IMR-90 (cell line): ENCODE measurements at regions of chr2 and their contacts with region 1.

Region 1: DNA sequence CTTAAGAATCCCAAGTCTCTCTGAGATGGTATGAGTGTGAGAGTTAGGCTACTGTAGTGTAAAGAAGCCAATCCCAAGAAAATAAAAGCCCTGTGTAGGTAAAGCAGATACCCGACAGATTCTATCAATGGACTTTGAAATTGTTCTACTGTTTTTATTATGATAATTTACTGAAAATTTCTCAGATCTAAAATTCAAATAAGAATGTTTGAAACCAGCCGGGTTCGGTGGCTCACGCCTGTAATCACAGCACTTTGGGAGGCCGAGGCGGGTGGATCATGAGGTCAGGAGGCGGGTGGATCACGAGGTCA is 208.3 kb upstream of the SPRED2 start:
- DNase-seq: no peak
- ATAC-seq: no peak
- H3K4me3 ChIP-seq: no peak overlapping the region
- H3K27ac ChIP-seq: no peak overlapping the region
- H3K4me1 ChIP-seq: peaks cover 2% of the 10 kb centered on the region
- H3K27me3 ChIP-seq: peaks cover 28% of the 10 kb centered on the region
- CTCF ChIP-seq: no peak
- POLR2A ChIP-seq: no peak
- RAD21 ChIP-seq: no peak

Region 2: DNA sequence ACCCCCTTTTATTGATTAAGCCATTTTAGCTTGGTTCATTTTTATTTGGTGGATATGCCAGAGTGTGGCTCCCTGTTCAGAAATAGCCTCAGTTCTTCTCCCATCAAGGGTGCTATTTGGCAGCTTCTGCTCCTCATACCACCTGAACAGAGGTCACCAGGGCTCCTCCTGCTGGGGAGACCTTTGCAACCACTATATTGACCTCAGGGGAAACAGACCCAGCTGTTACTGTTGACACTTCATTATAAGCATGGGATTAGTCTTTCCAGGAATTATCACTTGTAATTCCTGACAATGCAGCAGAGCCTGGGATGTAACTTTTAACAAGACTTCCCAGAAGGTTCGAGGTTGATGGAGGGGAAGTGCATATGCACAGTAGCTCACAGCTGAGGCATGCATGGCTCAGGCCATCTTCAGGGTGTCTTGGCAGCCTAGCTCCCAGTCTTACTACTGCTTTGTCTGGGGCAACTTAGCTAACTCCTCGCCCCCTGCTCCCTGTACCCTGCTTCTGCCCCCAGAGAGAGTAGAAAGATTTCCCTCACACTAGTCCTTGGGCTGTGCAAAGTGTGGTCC is 31.0 kb after region 1 on chr2:
- CTCF ChIA-PET with region 1: no interaction called
- POLR2A ChIA-PET with region 1: no interaction called
- dilution Hi-C with region 1: no loop called
- in situ Hi-C with region 1: no loop called
- intact Hi-C with region 1: no loop called
- DNase-seq: no peak
- ATAC-seq: no peak
- H3K4me3 ChIP-seq: no peak overlapping the region
- H3K27ac ChIP-seq: no peak overlapping the region
- H3K4me1 ChIP-seq: no peaks in the 10 kb centered on the region
- H3K27me3 ChIP-seq: peaks cover 19% of the 10 kb centered on the region
- CTCF ChIP-seq: no peak
- POLR2A ChIP-seq: no peak
- RAD21 ChIP-seq: no peak

Region 3: GRCh38 chr2:65710779-65711295 is 70.1 kb after region 1 on chr2:
- CTCF ChIA-PET with region 1: interaction called, 3 read pairs
- POLR2A ChIA-PET with region 1: no interaction called
- dilution Hi-C with region 1: no loop called
- in situ Hi-C with region 1: no loop called
- intact Hi-C with region 1: loop called (anchors 1 kb)
- DNase-seq: peak; percentile 8
- ATAC-seq: peak; percentile 35; the same call in 1 of the 2 replicates
- H3K4me3 ChIP-seq: no peak overlapping the region
- H3K27ac ChIP-seq: no peak overlapping the region
- H3K4me1 ChIP-seq: peaks cover 5% of the 10 kb centered on the region
- H3K27me3 ChIP-seq: peaks cover 9% of the 10 kb centered on the region
- CTCF ChIP-seq: peak; percentile 36; the same call in 1 of the 2 replicates
- POLR2A ChIP-seq: no peak
- RAD21 ChIP-seq: 0 out of 2 replicates have a peak, but pooled peaks have one; percentile 21

Region 4: DNA sequence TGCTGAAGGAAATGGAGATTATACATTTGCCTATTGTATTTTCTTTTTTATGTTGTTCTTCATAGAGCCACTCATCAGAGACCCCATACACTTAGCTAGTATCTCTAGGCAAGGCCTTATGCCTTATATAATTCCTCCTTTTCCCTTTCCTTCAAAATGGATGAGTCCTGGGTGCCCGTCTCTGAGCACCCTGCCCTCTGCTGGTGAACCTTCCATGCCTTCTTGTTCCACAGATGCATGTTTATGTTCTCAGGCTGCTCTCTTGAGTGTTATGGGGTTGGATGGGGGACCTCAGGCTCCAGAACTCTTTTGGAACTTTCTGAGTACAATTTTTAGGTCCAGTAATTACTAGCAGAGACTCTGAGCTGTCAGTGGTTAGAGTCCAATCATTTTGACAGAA is 160.2 kb after region 1 on chr2:
- CTCF ChIA-PET with region 1: interaction called, 3 read pairs
- POLR2A ChIA-PET with region 1: no interaction called
- dilution Hi-C with region 1: no loop called
- in situ Hi-C with region 1: no loop called
- intact Hi-C with region 1: loop called (anchors 1 kb)
- DNase-seq: peak; percentile 23
- ATAC-seq: peak; percentile 49; the same call in 1 of the 2 replicates
- H3K4me3 ChIP-seq: no peak overlapping the region
- H3K27ac ChIP-seq: no peak overlapping the region
- H3K4me1 ChIP-seq: no peaks in the 10 kb centered on the region
- H3K27me3 ChIP-seq: peaks cover 5% of the 10 kb centered on the region
- CTCF ChIP-seq: peak; percentile 45
- POLR2A ChIP-seq: no peak
- RAD21 ChIP-seq: peak; percentile 40

Region 5: DNA sequence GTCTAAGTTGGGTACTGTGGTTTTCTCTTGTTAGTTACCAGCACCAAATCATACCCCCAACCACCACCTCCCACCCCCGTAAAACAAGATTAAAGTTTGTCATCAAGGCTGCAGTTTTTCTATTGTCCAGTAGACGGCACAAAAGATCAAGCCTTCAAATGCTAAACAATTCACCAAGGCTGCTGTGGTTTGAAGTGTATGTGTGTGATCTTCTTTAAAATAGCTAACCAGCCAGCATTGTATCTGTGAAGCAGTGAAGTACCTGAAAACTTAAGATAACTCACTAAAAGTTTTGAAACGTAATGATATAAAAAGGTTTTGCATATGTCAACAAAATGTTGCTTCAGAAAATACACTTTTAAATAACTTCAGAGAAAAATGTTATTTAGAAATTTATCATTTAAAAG is 788.3 kb after region 1 on chr2:
- CTCF ChIA-PET with region 1: no interaction called
- POLR2A ChIA-PET with region 1: no interaction called
- dilution Hi-C with region 1: no loop called
- in situ Hi-C with region 1: loop called (anchors 25 kb)
- intact Hi-C with region 1: loop called (anchors 2 kb)
- DNase-seq: peak; percentile 79
- ATAC-seq: peak; percentile 19; the same call in 1 of the 2 replicates
- H3K4me3 ChIP-seq: no peak overlapping the region
- H3K27ac ChIP-seq: no peak overlapping the region
- H3K4me1 ChIP-seq: peaks cover 5% of the 10 kb centered on the region; the same call in 1 of the 2 replicates
- H3K27me3 ChIP-seq: peaks cover 6% of the 10 kb centered on the region; the same call in 1 of the 2 replicates
- CTCF ChIP-seq: peak; percentile 86
- POLR2A ChIP-seq: 0 out of 2 replicates have a peak, but pooled peaks have one; percentile 24
- RAD21 ChIP-seq: peak; percentile 88

Region 6: GRCh38 chr2:67612576-67612981 is 1971.8 kb after region 1 on chr2:
- CTCF ChIA-PET with region 1: no interaction called
- POLR2A ChIA-PET with region 1: no interaction called
- dilution Hi-C with region 1: no loop called
- in situ Hi-C with region 1: no loop called
- intact Hi-C with region 1: no loop called
- DNase-seq: no peak
- ATAC-seq: no peak
- H3K4me3 ChIP-seq: no peak overlapping the region
- H3K27ac ChIP-seq: no peak overlapping the region
- H3K4me1 ChIP-seq: peaks cover 7% of the 10 kb centered on the region
- H3K27me3 ChIP-seq: no peaks in the 10 kb centered on the region
- CTCF ChIP-seq: no peak
- POLR2A ChIP-seq: no peak
- RAD21 ChIP-seq: no peak